ENCODE measurements at regions of chr7 and their contacts with region 1.

Region 1: GRCh38 chr7:42940985-42941847 is 9.0 kb downstream of the MRPL32 start:
- ATAC-seq: peak; percentile 68 to 97 (median 95)
- H3K4me3 ChIP-seq: no peak overlapping the region
- H3K27ac ChIP-seq: no peak overlapping the region
- H3K4me1 ChIP-seq: no peaks in the 10 kb centered on the region

Region 2: GRCh38 chr7:42283553-42283952 is 657.7 kb before region 1 on chr7:
- in situ Hi-C with region 1: no loop called
- ATAC-seq: peak in 1 of 8 experiments; percentile 47
- H3K4me3 ChIP-seq: no peak overlapping the region
- H3K27ac ChIP-seq: no peak overlapping the region
- H3K4me1 ChIP-seq: no peaks in the 10 kb centered on the region

Region 3: GRCh38 chr7:43108255-43109011 is 167.2 kb after region 1 on chr7:
- in situ Hi-C with region 1: loop called in 2 of 9 experiments (anchors 10 to 25 kb)
- ATAC-seq: peak; percentile 45 to 92 (median 55)
- H3K4me3 ChIP-seq: no peak overlapping the region
- H3K27ac ChIP-seq: no peak overlapping the region
- H3K4me1 ChIP-seq: peaks cover 0 to 9% of the 10 kb centered on the region in 2 donors

Region 4: DNA sequence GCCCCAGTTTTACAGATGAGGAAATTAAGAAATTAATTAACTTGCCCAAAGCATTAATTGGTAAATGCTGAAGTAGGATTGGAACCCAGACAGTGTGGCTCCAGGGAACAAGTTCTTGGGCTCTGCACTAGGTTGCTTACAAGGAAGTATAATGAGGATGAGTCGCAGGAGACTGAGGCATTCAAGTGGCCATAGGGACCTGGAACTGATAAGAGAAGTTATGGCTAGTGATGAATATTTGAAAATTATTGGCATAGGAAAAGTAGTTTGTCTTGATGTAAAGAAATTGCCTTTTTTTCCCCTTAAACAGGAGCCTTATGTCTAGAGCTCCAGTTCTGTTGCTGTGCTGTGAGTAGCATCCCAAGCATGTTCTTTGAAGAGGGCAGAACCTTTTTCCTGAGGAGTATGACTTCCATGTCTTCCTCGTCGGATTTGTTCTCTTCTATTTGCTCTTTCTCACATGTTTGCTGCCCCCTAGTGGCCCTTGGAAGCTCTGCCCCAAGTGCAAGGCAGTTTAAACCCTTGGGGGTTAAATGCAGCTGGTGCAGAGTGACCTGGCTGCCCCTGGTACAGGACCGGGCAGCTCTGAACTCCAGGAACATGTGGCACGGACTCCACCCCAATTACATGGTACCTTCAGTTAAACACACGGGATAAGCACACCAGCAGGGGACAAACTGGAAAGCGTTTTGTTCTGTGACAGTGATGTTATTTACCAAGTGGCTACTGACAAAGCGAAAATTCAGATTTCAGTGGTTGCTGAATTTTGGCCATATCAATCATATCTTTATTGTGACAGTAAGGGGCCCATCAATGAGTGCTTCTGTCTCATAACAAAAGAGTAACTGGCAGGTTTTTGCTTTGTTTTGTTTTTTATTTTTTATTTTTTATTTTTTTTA is 320.0 kb after region 1 on chr7:
- in situ Hi-C with region 1: loop called in 2 of 9 experiments (anchors 10 to 25 kb)
- ATAC-seq: peak in 6 of 8 experiments; percentile 29 to 97 (median 84)
- H3K4me3 ChIP-seq: no peak overlapping the region
- H3K27ac ChIP-seq: no peak overlapping the region
- H3K4me1 ChIP-seq: no peaks in the 10 kb centered on the region